Heart right ventricle (tissue), 16 donors: ENCODE measurements at regions of chr19 and their contacts with region 1.

Region 1: GRCh38 chr19:48582168-48582567 is 24.4 kb upstream of the SPACA4 start:
- DNase-seq: no peak
- ATAC-seq: no peak
- H3K4me3 ChIP-seq: no peak overlapping the region
- H3K27ac ChIP-seq: no peak overlapping the region
- H3K4me1 ChIP-seq: peaks cover 0 to 9% (median 7%) of the 10 kb centered on the region in 9 donors
- H3K27me3 ChIP-seq: no peaks in the 10 kb centered on the region
- CTCF ChIP-seq: no peak

Region 2: GRCh38 chr19:48244281-48244680 is 337.9 kb before region 1 on chr19:
- intact Hi-C with region 1: no loop called
- DNase-seq: no peak
- ATAC-seq: peak in 2 of 8 donors; percentile 29 to 37
- H3K4me3 ChIP-seq: peak overlapping the region in 2 of 10 donors; percentile 10 to 28
- H3K27ac ChIP-seq: peak overlapping the region in 5 of 10 donors; percentile 11 to 81 (median 48)
- H3K4me1 ChIP-seq: peaks cover 0 to 47% (median 15%) of the 10 kb centered on the region in 9 donors
- H3K27me3 ChIP-seq: no peaks in the 10 kb centered on the region
- CTCF ChIP-seq: no peak

Region 3: GRCh38 chr19:48271531-48272151 is 310.5 kb before region 1 on chr19:
- intact Hi-C with region 1: loop called in 5 of 10 experiments (anchors 2 to 10 kb)
- DNase-seq: peak; percentile 40 to 45
- ATAC-seq: peak; percentile 59 to 80 (median 75)
- H3K4me3 ChIP-seq: peak overlapping the region; percentile 34 to 71 (median 58)
- H3K27ac ChIP-seq: peak overlapping the region in 9 of 10 donors; percentile 24 to 85 (median 73)
- H3K4me1 ChIP-seq: peaks cover 0 to 21% (median 8%) of the 10 kb centered on the region in 9 donors
- H3K27me3 ChIP-seq: peaks cover 0 to 3% (median 0%) of the 10 kb centered on the region in 7 donors
- CTCF ChIP-seq: no peak

Region 4: GRCh38 chr19:48492925-48493717 is 89.0 kb before region 1 on chr19:
- intact Hi-C with region 1: loop called in 7 of 10 experiments (anchors 1 to 5 kb)
- DNase-seq: peak; percentile 95
- ATAC-seq: peak; percentile 86 to 94 (median 89)
- H3K4me3 ChIP-seq: peak overlapping the region in 9 of 10 donors; percentile 25 to 62 (median 57)
- H3K27ac ChIP-seq: peak overlapping the region in 9 of 10 donors; percentile 25 to 83 (median 67)
- H3K4me1 ChIP-seq: peaks cover 2 to 52% (median 30%) of the 10 kb centered on the region in 9 donors
- H3K27me3 ChIP-seq: peaks cover 0 to 62% (median 18%) of the 10 kb centered on the region in 7 donors
- CTCF ChIP-seq: no peak

Region 5: GRCh38 chr19:48506138-48506733 is 75.9 kb before region 1 on chr19:
- intact Hi-C with region 1: loop called in 8 of 10 experiments (anchors 1 to 5 kb)
- DNase-seq: no peak
- ATAC-seq: no peak
- H3K4me3 ChIP-seq: no peak overlapping the region
- H3K27ac ChIP-seq: no peak overlapping the region
- H3K4me1 ChIP-seq: peaks cover 0 to 13% (median 8%) of the 10 kb centered on the region in 9 donors
- H3K27me3 ChIP-seq: peaks cover 3 to 34% (median 22%) of the 10 kb centered on the region in 7 donors
- CTCF ChIP-seq: peak; percentile 9 to 52 (median 41)

Region 6: DNA sequence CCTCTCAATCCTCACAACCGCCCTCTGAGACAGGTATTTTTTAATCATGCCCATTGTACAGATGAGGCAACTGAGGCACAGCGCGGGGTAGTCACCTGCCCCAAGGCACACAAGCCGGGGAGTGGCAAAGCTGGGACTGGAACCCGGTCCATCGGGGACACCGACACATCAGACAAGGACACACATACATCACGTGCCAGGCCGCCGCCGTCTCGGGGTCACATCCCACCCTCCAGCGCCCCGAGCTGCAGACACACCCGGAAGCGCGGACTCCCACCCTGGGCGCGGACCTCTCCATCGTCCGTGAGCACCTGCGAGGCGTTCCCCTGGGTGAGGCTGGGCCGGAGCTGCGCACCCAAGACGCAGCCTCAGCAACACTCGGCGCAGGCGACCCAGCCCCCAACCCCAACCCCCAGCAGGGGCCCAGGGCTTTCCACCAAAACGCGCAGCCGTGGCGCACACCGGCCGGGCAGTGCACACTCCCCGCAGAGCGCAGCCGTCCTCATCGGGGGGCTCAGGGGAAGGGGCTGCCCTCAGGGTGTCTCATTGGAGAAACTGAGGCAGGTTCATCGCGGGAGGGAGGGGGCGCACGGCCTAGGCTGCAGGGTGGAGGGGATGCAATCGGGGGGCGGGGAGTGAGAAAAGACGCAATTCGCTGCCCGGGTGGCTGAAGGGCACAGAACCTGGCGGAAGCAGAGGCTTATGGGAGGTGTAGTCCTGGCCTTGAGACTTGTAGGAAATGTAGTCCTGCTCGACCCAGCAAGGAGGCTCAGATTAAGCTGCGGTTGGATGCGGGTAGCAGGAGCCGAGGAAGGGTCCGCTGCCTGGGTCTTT is 68.7 kb before region 1 on chr19:
- intact Hi-C with region 1: loop called in 7 of 10 experiments (anchors 5 kb)
- DNase-seq: peak; percentile 47 to 66
- ATAC-seq: peak; percentile 69 to 88 (median 78)
- H3K4me3 ChIP-seq: peak overlapping the region; percentile 42 to 66 (median 60)
- H3K27ac ChIP-seq: peak overlapping the region in 3 of 10 donors; percentile 27 to 56 (median 28)
- H3K4me1 ChIP-seq: peaks cover 0 to 27% (median 12%) of the 10 kb centered on the region in 9 donors
- H3K27me3 ChIP-seq: peaks cover 4 to 48% (median 35%) of the 10 kb centered on the region in 7 donors
- CTCF ChIP-seq: no peak

Region 7: GRCh38 chr19:48946463-48947257 is 364.5 kb after region 1 on chr19:
- intact Hi-C with region 1: no loop called
- DNase-seq: no peak
- ATAC-seq: peak in 2 of 8 donors; percentile 23 to 28
- H3K4me3 ChIP-seq: no peak overlapping the region
- H3K27ac ChIP-seq: no peak overlapping the region
- H3K4me1 ChIP-seq: peaks cover 0 to 9% (median 0%) of the 10 kb centered on the region in 9 donors
- H3K27me3 ChIP-seq: no peaks in the 10 kb centered on the region
- CTCF ChIP-seq: no peak